AG04449 (cell line): ENCODE measurements at regions of chr16 and their contacts with region 1.

Region 1: GRCh38 chr16:46673320-46674013 is 15.5 kb downstream of the VPS35 start:
- DNase-seq: no peak
- H3K4me3 ChIP-seq: no peak overlapping the region
- CTCF ChIP-seq: peak; percentile 82

Region 2: GRCh38 chr16:46658925-46659324 is 14.5 kb before region 1 on chr16:
- CTCF ChIA-PET with region 1: interaction called, 10 read pairs
- POLR2A ChIA-PET with region 1: no interaction called
- DNase-seq: no peak
- H3K4me3 ChIP-seq: no peak overlapping the region
- CTCF ChIP-seq: no peak

Region 3: GRCh38 chr16:46689365-46690280 is 16.2 kb after region 1 on chr16 and contains the start of gene ORC6:
- CTCF ChIA-PET with region 1: interaction called, 13 read pairs
- POLR2A ChIA-PET with region 1: no interaction called
- DNase-seq: peak; percentile 63
- H3K4me3 ChIP-seq: peak within 1 kb of the TSS; percentile 89
- CTCF ChIP-seq: peak; percentile 62

Region 4: DNA sequence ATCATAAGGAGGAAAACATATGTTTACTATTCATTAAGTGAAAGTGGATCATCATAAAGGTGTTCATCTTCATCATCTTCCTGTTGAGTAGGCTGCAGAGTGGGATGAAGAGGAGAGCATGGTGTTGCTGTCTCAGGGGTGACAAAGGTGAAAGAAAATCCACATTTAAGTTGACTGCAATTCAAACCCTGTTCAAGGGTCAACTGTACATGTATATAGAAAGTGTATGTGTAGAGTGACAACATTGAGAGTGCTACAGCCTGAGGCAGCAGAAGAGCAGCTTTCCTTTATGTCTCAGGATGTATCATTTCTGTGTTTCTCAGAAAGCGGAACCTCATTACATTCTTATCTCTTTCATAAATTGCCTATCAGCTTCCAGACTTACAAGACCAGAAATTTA is 33.2 kb after region 1 on chr16:
- CTCF ChIA-PET with region 1: no interaction called
- POLR2A ChIA-PET with region 1: no interaction called
- DNase-seq: no peak
- H3K4me3 ChIP-seq: no peak overlapping the region
- CTCF ChIP-seq: no peak

Region 5: GRCh38 chr16:46801428-46802049 is 128.1 kb after region 1 on chr16:
- CTCF ChIA-PET with region 1: interaction called, 91 read pairs
- POLR2A ChIA-PET with region 1: no interaction called
- DNase-seq: no peak
- H3K4me3 ChIP-seq: no peak overlapping the region
- CTCF ChIP-seq: peak; percentile 25

Region 6: DNA sequence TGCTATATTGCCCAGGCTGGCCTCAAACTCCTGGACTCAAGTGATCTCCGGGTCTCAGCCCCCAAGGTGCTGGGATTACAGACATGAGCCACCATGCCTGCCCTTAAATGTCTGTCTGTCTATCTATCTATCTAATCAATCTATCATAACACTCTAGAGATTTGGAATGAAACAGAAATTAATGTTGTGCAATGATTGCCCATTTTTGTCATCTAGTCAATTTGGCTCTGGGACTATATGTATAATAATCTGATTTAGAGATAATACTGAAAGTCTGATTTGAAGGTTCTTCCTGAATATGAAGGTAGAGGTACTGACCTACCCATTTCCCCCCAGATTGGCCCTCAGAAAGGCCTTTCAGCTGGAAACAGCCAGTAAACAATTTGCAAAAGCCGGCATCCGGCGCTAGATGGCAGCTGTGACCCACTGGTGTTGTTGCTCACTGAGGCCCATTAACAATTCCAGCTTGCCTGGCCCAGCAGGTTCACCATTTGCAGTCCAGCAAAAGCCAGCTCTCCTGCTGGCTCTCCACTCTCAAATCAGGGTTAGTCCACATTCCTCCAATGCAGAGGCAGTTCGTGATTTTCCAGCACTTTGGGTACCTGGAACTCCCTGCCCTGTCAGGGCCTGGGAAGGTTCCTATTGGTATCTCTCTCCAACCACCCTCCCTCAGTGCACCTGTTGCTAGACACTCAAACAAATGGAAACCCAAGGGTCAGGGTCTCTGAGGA is 180.4 kb after region 1 on chr16:
- CTCF ChIA-PET with region 1: interaction called, 11 read pairs
- POLR2A ChIA-PET with region 1: no interaction called
- DNase-seq: no peak
- H3K4me3 ChIP-seq: no peak overlapping the region
- CTCF ChIP-seq: peak; percentile 84

Region 7: DNA sequence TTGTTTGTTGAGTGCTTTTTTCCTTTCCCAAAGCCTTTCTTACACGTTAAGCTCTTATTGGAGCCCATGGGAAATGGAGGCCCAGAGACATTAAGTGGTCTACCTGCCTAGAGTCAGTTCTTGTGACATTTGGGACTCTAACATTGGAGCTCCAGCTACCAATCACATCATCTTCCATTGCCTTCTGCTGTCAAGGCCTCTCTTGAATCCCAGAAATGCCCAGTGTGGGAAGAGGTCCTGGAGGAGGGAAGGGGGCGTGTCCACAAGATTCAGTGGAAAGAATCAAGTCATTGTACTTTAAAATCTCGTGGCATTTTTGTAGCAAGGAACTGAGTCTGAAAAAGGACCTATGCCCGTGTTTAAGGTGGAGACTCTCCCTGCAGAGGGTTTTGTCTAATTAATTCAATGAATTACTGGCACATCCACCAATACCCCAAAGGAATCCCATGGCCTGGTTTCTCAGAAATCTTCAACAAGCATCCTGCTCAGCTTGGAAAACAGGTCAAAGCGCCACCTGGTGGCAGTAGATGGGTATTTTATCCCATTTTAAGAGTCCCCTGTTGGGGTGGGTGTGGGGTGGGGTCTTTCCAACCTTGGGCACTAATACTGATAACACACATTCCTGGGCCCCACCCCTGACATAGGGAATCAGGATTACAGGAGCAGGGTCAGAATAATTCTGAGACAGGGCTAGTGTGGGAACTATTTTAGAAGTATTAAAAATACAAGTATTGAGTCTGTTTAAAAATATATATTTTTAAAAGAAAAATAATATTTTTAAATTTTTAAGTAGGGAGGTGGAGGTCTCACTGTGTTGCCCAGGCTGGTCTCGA is 235.3 kb after region 1 on chr16:
- CTCF ChIA-PET with region 1: interaction called, 29 read pairs
- POLR2A ChIA-PET with region 1: no interaction called
- DNase-seq: peak; percentile 5
- H3K4me3 ChIP-seq: no peak overlapping the region
- CTCF ChIP-seq: peak; percentile 58

Region 8: GRCh38 chr16:46918861-46919792 is 245.7 kb after region 1 on chr16:
- CTCF ChIA-PET with region 1: no interaction called
- POLR2A ChIA-PET with region 1: no interaction called
- DNase-seq: no peak
- H3K4me3 ChIP-seq: no peak overlapping the region
- CTCF ChIP-seq: no peak